HEK293 (cell line): ENCODE measurements at regions of chr17 and their contacts with region 1.

Region 1: DNA sequence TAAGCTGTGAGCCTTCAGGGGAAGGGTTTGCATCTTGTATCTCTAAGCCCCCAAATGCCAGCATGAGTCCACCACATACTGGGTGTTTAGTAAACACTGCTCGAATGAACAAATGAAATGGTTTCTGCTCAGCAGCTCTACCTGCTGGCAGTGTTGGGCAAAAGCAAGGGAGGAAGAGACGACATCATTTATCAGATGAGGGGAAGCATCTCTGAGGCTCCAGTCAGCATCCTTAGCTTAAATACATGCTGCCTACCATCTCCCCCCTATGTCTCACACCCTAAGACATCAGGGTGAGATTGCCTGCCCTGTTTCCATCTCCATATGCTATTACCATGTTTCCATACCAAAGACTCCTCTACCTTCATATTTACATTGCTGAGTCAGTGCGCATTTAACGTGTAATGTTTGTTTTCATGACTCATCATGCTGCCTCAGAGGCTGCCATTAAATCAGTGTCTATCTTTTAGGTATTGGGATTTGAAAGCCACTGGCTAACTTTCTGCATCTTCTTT is 379.8 kb downstream of the UTP18 start:
- H3K4me3 ChIP-seq: no peak overlapping the region
- H3K27ac ChIP-seq: no peak overlapping the region
- H3K4me1 ChIP-seq: peaks cover 17% of the 10 kb centered on the region
- CTCF ChIP-seq: peak; percentile 53; the same call in 1 of the 2 replicates

Region 2: DNA sequence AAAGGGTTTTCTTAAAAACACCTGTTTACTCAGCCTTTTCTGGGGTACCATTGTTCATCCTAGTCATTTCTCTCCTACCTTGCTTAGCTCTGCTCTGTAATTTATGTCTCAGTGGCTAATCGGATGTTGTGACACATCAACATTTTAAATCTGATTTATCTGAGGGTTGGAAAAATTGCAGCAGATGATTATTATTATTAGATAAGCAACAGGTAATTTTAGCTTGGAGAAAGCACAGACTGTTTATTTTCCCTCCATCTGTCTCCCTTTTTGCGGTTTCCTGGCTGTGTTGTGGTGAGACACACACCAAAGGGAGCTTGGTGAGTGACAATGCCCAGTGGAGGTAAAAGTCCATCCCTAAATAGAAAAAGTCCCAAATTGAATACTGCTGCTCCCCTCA is 10.0 kb after region 1 on chr17:
- CTCF ChIA-PET with region 1: interaction called, 22 read pairs
- POLR2A ChIA-PET with region 1: no interaction called
- H3K4me3 ChIP-seq: no peak overlapping the region
- H3K27ac ChIP-seq: peak overlapping the region; percentile 92
- H3K4me1 ChIP-seq: peaks cover 66% of the 10 kb centered on the region
- CTCF ChIP-seq: no peak